PC-9 (cell line): ENCODE measurements at regions of chr6 and their contacts with region 1.

Region 1: DNA sequence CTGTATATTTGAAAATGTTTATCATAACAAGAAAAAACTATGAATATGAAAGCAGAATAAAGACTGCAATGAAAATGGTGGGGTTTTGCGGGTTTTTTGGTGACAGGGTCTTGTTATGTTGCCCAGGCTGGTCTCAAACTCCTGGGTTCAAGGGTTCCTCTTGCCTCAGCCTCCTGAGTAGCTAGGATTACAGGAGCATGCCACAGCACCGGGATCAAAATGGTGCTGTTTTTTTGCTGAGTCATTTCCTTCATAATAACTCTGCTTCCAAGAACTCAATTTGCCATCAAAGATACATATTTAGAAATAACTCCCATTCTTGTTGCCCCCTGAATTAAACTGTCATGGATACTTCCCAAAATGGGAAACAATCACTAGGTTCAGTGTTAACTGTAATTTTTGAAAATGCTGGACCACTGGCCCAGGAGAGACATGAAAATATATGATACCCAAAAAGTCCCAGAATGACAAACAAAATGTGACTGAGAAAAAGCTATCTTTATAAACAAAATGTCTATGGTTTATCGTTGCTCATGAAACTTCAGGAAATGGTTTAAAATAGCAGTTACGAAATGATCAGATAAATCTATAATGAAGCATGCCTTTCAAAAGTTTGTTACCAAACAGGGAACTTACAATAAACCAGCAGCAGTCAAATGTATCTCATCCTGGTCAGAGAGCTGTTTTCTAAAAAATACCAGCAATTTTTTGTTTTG is 32.2 kb downstream of the ILRUN start:
- DNase-seq: no peak
- H3K4me3 ChIP-seq: no peak overlapping the region
- H3K27ac ChIP-seq: peak overlapping the region; percentile 70
- H3K4me1 ChIP-seq: peaks cover 13% of the 10 kb centered on the region
- H3K27me3 ChIP-seq: no peaks in the 10 kb centered on the region
- CTCF ChIP-seq: no peak

Region 2: GRCh38 chr6:34630040-34630439 is 34.4 kb before region 1 on chr6:
- CTCF ChIA-PET with region 1: no interaction called
- POLR2A ChIA-PET with region 1: interaction called, 13 read pairs
- intact Hi-C with region 1: no loop called
- DNase-seq: peak in 1 of 2 experiments; percentile 81
- H3K4me3 ChIP-seq: no peak overlapping the region
- H3K27ac ChIP-seq: peak overlapping the region; percentile 62
- H3K4me1 ChIP-seq: peaks cover 9% of the 10 kb centered on the region; the same call in 1 of the 2 replicates
- H3K27me3 ChIP-seq: no peaks in the 10 kb centered on the region
- CTCF ChIP-seq: no peak

Region 3: GRCh38 chr6:34858681-34859080 is 194.3 kb after region 1 on chr6:
- CTCF ChIA-PET with region 1: no interaction called
- POLR2A ChIA-PET with region 1: no interaction called
- intact Hi-C with region 1: no loop called
- DNase-seq: no peak
- H3K4me3 ChIP-seq: no peak overlapping the region
- H3K27ac ChIP-seq: no peak overlapping the region
- H3K4me1 ChIP-seq: no peaks in the 10 kb centered on the region
- H3K27me3 ChIP-seq: no peaks in the 10 kb centered on the region
- CTCF ChIP-seq: no peak